Gastrocnemius medialis (tissue), 4 donors: ENCODE measurements at regions of chrX and their contacts with region 1.

Region 1: GRCh38 chrX:25191403-25191802 is 175.6 kb upstream of the ARX start:
- DNase-seq: no peak
- ATAC-seq: no peak
- H3K4me3 ChIP-seq: no peak overlapping the region
- H3K27ac ChIP-seq: no peak overlapping the region
- H3K4me1 ChIP-seq: no peaks in the 10 kb centered on the region
- H3K27me3 ChIP-seq: no peaks in the 10 kb centered on the region
- CTCF ChIP-seq: peak in 1 of 5 experiments; percentile 15
- POLR2A ChIP-seq: no peak

Region 2: GRCh38 chrX:25275159-25275558 is 83.8 kb after region 1 on chrX:
- in situ Hi-C with region 1: no loop called
- intact Hi-C with region 1: loop called (anchors 10 kb)
- DNase-seq: no peak
- ATAC-seq: peak in 1 of 2 donors; percentile 58
- H3K4me3 ChIP-seq: no peak overlapping the region
- H3K27ac ChIP-seq: no peak overlapping the region
- H3K4me1 ChIP-seq: no peaks in the 10 kb centered on the region
- H3K27me3 ChIP-seq: no peaks in the 10 kb centered on the region
- CTCF ChIP-seq: peak in 4 of 5 experiments; percentile 16 to 25 (median 20)
- POLR2A ChIP-seq: no peak